Heart left ventricle (tissue), 16 donors: ENCODE measurements at regions of chr5 and their contacts with region 1.

Region 1: DNA sequence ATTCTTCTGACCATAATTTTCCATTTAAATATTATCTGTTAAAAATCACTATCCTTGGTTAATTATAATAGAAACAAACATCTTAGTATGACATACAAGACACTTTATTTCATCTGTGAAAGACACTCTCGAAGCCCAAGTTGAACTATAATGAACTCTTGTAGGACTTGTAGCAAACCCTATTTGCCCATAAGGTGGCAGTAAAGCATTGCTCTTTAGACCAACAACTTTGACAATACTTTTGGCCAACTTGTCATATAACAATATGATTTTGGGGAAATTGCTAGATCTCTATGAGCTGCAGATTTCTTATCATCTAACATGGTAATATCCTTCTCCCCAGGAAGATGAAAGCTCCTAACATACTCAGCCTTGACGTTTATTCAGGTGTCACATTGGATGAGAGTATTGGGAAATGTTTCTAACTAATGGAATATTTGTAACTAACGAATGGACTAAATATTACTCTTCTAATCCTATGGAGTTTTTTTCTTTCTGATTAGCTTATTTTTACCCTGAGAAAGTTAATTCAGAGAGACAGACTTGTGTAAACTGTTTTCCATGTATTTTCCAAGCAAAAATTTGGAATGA is 11.0 kb downstream of the SPINK14 start:
- DNase-seq: peak in 1 of 5 donors; percentile 6
- ATAC-seq: peak in 3 of 4 donors; percentile 49 to 75 (median 70)
- H3K4me3 ChIP-seq: no peak overlapping the region
- H3K27ac ChIP-seq: no peak overlapping the region
- H3K4me1 ChIP-seq: peaks cover 0 to 5% (median 0%) of the 10 kb centered on the region in 12 donors
- H3K27me3 ChIP-seq: no peaks in the 10 kb centered on the region
- CTCF ChIP-seq: peak; percentile 51 to 88 (median 74)
- POLR2A ChIP-seq: no peak

Region 2: DNA sequence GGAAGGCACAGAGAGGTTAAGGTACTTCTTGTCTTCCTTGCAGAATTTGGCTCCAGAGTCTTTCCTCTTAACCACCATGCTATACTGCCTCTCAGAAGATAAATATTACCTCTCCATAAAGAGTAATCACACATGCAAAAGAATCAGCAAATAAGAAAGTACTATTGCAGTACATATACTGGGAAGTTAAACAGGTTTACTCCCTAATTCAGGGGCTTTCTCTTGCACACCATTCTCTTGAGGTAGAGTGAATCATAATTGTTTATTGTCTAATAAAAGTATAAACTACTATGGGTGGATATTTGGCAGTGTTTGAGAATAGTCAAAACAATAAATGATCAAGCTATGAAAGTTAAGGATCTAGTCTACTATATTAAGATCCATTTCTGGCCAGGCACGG is 75.1 kb before region 1 on chr5:
- intact Hi-C with region 1: no loop called
- DNase-seq: no peak
- ATAC-seq: no peak
- H3K4me3 ChIP-seq: no peak overlapping the region
- H3K27ac ChIP-seq: no peak overlapping the region
- H3K4me1 ChIP-seq: no peaks in the 10 kb centered on the region
- H3K27me3 ChIP-seq: no peaks in the 10 kb centered on the region
- CTCF ChIP-seq: no peak
- POLR2A ChIP-seq: no peak

Region 3: GRCh38 chr5:148482691-148483462 is 303.5 kb after region 1 on chr5:
- intact Hi-C with region 1: loop called in 1 of 10 experiments (anchors 5 kb)
- DNase-seq: peak; percentile 29 to 75 (median 46)
- ATAC-seq: peak in 3 of 4 donors; percentile 36 to 54 (median 36)
- H3K4me3 ChIP-seq: peak overlapping the region in 2 of 12 donors; percentile 3 to 12
- H3K27ac ChIP-seq: peak overlapping the region in 1 of 12 donors; percentile 14
- H3K4me1 ChIP-seq: peaks cover 0 to 9% (median 0%) of the 10 kb centered on the region in 12 donors
- H3K27me3 ChIP-seq: peaks cover 0 to 3% (median 0%) of the 10 kb centered on the region in 9 donors
- CTCF ChIP-seq: peak; percentile 37 to 70 (median 56)
- POLR2A ChIP-seq: no peak

Region 4: GRCh38 chr5:149035372-149035790 is 856.1 kb after region 1 on chr5:
- intact Hi-C with region 1: loop called in 3 of 10 experiments (anchors 10 kb)
- DNase-seq: peak; percentile 71 to 88 (median 77)
- ATAC-seq: peak; percentile 82 to 94 (median 91)
- H3K4me3 ChIP-seq: no peak overlapping the region
- H3K27ac ChIP-seq: no peak overlapping the region
- H3K4me1 ChIP-seq: peaks cover 0 to 39% (median 8%) of the 10 kb centered on the region in 12 donors
- H3K27me3 ChIP-seq: no peaks in the 10 kb centered on the region
- CTCF ChIP-seq: peak; percentile 69 to 91 (median 86)
- POLR2A ChIP-seq: no peak